Activated CD8-positive, alpha-beta T cell treated with anti-CD3 and anti-CD28 coated beads for 36 hours (primary cell): ENCODE measurements at regions of chr15 and their contacts with region 1.

Region 1: DNA sequence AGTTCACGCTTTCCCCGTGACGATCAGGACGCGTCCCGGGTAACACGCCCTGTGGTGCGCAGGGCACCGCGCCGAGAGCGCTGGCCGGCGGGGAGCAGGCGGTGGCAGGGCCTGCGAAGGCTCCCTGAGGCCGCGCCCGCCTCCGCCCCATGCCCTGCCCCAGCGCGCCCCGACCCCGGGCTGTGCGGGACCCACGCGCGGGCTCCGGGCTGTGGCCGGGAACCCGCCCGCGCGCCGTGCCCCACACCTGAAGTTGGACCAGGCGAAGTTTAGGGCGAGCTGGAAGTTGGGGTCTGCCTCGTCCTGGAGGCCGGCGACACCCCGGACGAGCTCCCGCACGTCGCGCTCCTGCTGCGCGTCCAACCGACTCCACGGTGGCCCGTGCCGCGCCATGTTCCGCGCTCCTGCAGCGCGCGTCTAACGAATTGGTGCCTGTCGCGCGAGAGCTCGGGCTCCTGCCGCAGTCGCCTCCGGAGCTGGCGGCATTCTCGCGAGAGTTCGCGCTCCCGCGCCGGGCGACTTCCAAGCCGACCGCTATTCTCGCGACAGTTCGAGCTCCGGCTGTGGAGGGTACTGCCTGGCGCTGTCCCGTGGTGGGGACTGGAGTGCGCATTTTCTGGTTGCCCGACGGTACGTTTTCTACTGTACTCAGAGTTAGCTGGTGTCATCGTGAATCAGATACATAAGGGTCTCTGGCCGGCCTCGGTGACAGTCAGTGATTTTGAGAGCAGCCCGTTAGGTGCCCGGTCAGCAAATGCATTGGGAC is at the start of gene TUBGCP5:
- DNase-seq: peak; percentile 98
- ATAC-seq: peak; percentile 96
- H3K4me3 Mint-ChIP-seq: peak within 1 kb of the TSS; percentile 93
- H3K27ac Mint-ChIP-seq: peak within 1 kb of the TSS; percentile 96
- H3K4me1 Mint-ChIP-seq: peaks cover 24% of the 10 kb centered on the region
- H3K27me3 Mint-ChIP-seq: no peaks in the 10 kb centered on the region
- CTCF ChIP-seq: no peak
- total RNA-seq, gene TUBGCP5: 19.2 to 22.0 TPM

Region 2: DNA sequence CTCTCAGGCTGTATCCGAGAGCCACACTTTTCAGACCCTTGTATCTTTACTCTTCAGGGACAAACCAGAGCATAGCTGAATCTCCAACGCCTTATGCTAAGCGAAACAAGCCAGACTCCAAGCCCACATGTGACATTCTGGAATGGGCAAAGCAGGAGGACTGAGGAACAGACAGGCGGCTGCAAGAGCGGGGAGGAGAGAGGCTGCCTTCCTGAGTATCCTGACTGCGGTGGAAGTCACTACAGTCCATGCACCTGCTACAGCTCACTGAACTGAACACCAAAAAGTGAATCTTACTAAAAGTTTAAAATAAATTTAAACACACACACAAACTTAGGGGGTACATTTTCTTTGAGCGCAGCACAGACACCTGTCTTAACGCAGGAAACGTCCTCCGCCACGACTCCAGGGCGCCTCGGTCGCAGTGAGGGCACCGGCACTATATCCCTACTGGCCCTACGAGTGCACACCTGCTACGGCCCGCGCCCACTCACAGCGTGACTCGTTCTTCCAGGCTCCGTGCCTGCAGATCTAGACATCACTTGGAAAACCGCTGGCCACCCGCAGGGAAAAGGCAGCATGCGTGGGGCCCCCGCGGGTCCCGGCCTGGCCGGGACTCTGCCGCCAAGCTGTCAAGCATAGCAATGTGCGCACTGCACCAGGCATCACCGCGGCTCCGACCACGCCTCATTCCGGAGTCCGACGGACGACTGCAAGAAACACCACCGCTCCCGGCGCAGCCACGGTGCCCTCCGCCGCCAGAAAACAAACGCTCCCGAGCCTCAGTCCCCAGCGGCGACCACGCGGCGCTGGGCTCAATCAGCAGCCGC is 60.4 kb before region 1 on chr15:
- CTCF ChIA-PET with region 1: interaction called, 7 read pairs
- POLR2A ChIA-PET with region 1: interaction called, 3 read pairs
- intact Hi-C with region 1: loop called (anchors 10 kb)
- DNase-seq: peak; percentile 59
- ATAC-seq: peak; percentile 73
- H3K4me3 Mint-ChIP-seq: peak overlapping the region; percentile 82
- H3K27ac Mint-ChIP-seq: no peak overlapping the region
- H3K4me1 Mint-ChIP-seq: peaks cover 4% of the 10 kb centered on the region
- H3K27me3 Mint-ChIP-seq: peaks cover 13% of the 10 kb centered on the region
- CTCF ChIP-seq: no peak

Region 3: DNA sequence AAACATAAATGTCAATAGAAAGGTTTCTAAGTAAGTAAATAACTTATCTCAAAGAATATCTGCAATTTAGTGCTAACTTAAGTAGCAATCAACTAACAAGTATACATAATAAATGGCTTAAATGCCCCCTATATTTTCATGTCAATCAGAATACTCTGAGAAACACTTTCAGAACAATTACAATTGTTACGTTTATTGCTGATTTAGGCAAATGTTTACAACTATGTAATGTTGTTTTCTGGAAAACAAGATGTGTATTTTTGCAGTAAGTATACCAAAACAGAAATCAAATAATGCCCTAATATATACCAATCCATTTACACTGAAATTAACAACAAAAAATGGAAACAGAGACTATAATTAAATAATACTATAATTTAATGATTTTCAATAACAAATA is 13.1 kb before region 1 on chr15:
- CTCF ChIA-PET with region 1: interaction called, 14 read pairs
- POLR2A ChIA-PET with region 1: interaction called, 6 read pairs
- intact Hi-C with region 1: no loop called
- DNase-seq: no peak
- ATAC-seq: no peak
- H3K4me3 Mint-ChIP-seq: no peak overlapping the region
- H3K27ac Mint-ChIP-seq: no peak overlapping the region
- H3K4me1 Mint-ChIP-seq: no peaks in the 10 kb centered on the region
- H3K27me3 Mint-ChIP-seq: no peaks in the 10 kb centered on the region
- CTCF ChIP-seq: no peak